Activated naive CD4-positive, alpha-beta T cell treated with anti-CD3 and anti-CD28 coated beads for 36 hours (primary cell): ENCODE measurements at regions of chr4 and their contacts with region 1.

Region 1: GRCh38 chr4:9762823-9763475 is 18.5 kb upstream of the DRD5 start:
- DNase-seq: peak; percentile 63
- H3K4me3 Mint-ChIP-seq: no peak overlapping the region
- H3K27ac Mint-ChIP-seq: no peak overlapping the region
- H3K4me1 Mint-ChIP-seq: no peaks in the 10 kb centered on the region
- H3K27me3 Mint-ChIP-seq: peaks cover 16% of the 10 kb centered on the region

Region 2: DNA sequence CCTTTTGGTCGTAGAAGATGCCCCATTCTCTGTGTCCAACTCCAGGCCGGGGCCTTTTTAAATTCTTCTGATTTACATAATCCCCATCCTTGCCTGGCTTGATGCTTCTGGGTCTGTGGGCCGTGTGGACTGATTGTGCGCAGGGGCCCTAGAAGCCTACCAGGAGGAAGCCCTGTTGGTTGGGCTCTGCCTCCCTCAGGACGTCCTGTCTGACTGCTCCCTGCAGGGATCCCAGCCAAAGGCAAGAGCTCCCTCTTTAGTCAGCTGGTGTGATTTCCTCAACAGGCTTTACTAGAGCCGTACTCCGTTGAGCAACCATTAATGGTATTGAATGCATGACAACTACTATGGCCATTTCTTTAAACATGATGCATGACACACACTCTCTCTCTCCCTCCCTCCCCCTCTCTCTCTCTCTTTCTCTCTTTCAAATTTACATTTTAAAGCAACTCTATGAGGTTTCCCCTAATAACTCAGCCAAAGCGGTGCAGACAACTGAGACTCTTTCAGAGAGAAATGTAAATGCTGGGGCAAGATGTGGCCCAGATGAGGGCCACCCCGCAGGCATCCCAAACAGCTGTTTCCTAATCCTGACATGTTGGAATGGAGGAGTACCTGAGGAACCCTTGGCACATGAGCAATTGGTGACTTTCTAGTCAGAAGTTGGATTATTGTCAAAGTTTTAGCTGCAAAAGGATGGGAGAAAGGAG is 135.8 kb after region 1 on chr4:
- CTCF ChIA-PET with region 1: interaction called, 3 read pairs
- intact Hi-C with region 1: loop called (anchors 1 kb)
- DNase-seq: peak; percentile 30
- H3K4me3 Mint-ChIP-seq: no peak overlapping the region
- H3K27ac Mint-ChIP-seq: no peak overlapping the region
- H3K4me1 Mint-ChIP-seq: no peaks in the 10 kb centered on the region
- H3K27me3 Mint-ChIP-seq: no peaks in the 10 kb centered on the region

Region 3: GRCh38 chr4:9924750-9925149 is 161.8 kb after region 1 on chr4:
- CTCF ChIA-PET with region 1: no interaction called
- intact Hi-C with region 1: no loop called
- DNase-seq: no peak
- H3K4me3 Mint-ChIP-seq: no peak overlapping the region
- H3K27ac Mint-ChIP-seq: no peak overlapping the region
- H3K4me1 Mint-ChIP-seq: no peaks in the 10 kb centered on the region
- H3K27me3 Mint-ChIP-seq: no peaks in the 10 kb centered on the region

Region 4: DNA sequence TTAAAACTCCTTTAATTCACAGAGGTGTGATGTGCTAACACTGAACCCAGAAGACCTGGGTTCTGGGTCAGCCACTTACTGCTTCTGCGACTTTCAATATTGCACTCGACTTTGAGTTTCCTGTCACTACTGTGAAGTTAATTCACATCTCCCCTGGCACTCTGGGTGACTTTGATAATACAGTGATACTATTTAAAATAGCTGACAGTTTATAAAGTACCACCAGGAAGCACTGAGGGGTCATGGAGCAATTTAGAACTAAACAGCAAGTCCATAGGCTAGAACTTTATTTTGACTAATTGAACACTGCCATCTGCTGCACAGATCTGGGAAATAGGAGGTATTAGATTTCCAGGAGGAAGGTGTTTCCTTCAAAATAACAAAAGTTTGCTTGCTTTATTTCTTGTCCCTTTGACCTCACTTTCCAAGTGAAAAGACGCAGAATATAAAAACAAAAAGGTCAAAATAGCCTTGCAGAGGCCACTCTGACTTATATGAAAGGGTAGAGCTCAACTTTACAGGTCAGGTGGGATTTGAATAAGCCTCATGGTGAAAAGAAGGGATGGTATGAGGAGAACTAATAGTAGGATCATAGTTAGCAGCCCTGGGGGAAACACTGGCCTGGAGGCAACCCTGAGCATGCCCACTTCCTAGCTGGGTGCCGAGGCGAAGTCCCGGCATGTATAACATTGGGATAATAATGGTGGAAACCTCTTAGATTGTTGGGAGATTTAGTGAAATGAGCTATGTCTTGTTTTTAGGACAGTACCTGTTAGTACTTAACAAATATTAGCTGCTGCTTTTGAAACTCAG is 640.9 kb after region 1 on chr4:
- CTCF ChIA-PET with region 1: no interaction called
- intact Hi-C with region 1: loop called (anchors 5 kb)
- DNase-seq: peak; percentile 38
- H3K4me3 Mint-ChIP-seq: no peak overlapping the region
- H3K27ac Mint-ChIP-seq: no peak overlapping the region
- H3K4me1 Mint-ChIP-seq: no peaks in the 10 kb centered on the region
- H3K27me3 Mint-ChIP-seq: no peaks in the 10 kb centered on the region

Region 5: GRCh38 chr4:10554694-10555093 is 791.7 kb after region 1 on chr4:
- CTCF ChIA-PET with region 1: interaction called, 3 read pairs
- intact Hi-C with region 1: loop called (anchors 2 kb)
- DNase-seq: peak; percentile 71
- H3K4me3 Mint-ChIP-seq: no peak overlapping the region
- H3K27ac Mint-ChIP-seq: no peak overlapping the region
- H3K4me1 Mint-ChIP-seq: peaks cover 3% of the 10 kb centered on the region
- H3K27me3 Mint-ChIP-seq: peaks cover 11% of the 10 kb centered on the region